MCF 10A (cell line): ENCODE measurements at regions of chr13 and their contacts with region 1.

Region 1: DNA sequence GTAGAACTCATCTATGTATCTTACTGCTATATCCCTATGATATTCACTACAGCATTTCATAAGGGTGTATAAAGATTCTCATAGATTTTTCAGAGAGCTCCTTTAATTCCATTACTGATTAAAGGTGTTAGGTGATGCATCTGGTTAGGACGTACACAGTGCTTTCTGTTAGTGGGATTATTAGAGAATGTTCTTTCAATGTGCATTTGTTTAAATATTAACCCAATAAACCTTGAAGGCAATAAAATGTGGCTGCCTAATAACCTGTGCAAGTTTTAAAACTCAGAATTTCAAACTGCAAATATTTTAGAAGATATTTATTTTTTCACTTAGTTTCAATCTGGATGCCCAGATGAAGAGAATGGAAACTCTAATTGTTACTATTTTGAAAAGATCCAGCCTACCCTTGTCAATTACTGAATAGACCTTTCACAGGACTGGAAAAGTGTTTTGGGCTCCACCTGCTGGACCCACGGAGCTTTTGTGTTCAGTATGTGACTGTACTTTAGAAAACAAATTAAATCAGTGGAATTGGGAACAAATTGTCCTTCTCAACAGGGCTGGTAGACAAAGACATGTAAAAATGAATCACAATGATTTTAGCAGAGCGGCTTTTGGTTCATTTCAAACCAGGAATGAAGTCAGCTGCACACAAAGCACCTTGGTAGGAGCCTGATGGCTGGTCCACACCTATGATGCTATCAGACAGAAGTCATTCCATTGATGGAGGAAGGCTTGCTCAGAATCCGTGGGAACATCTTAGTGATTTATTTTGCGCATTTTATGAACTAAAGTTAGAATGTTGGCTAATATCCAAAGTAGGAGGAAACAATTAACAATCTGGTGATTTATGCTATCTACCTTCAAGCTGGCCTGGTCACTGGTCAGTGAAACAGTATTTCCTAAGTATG is 89.4 kb upstream of the RAP2A start:
- DNase-seq: peak; percentile 83
- H3K4me3 Mint-ChIP-seq: no peak overlapping the region
- H3K27ac Mint-ChIP-seq: no peak overlapping the region
- H3K4me1 Mint-ChIP-seq: no peaks in the 10 kb centered on the region
- H3K27me3 Mint-ChIP-seq: no peaks in the 10 kb centered on the region
- CTCF ChIP-seq: peak; percentile 85

Region 2: GRCh38 chr13:97030705-97031452 is 313.6 kb before region 1 on chr13:
- CTCF ChIA-PET with region 1: no interaction called
- POLR2A ChIA-PET with region 1: no interaction called
- intact Hi-C with region 1: loop called (anchors 5 kb)
- DNase-seq: peak; percentile 51
- H3K4me3 Mint-ChIP-seq: no peak overlapping the region
- H3K27ac Mint-ChIP-seq: no peak overlapping the region
- H3K4me1 Mint-ChIP-seq: peaks cover 5% of the 10 kb centered on the region
- H3K27me3 Mint-ChIP-seq: no peaks in the 10 kb centered on the region
- CTCF ChIP-seq: peak; percentile 38

Region 3: GRCh38 chr13:97257800-97258799 is 86.4 kb before region 1 on chr13:
- CTCF ChIA-PET with region 1: interaction called, 3 read pairs
- POLR2A ChIA-PET with region 1: interaction called, 6 read pairs
- intact Hi-C with region 1: loop called (anchors 1 kb)
- DNase-seq: peak; percentile 83
- H3K4me3 Mint-ChIP-seq: peak overlapping the region; percentile 56
- H3K27ac Mint-ChIP-seq: peak overlapping the region; percentile 96
- H3K4me1 Mint-ChIP-seq: peaks cover 74% of the 10 kb centered on the region
- H3K27me3 Mint-ChIP-seq: no peaks in the 10 kb centered on the region
- CTCF ChIP-seq: no peak

Region 4: DNA sequence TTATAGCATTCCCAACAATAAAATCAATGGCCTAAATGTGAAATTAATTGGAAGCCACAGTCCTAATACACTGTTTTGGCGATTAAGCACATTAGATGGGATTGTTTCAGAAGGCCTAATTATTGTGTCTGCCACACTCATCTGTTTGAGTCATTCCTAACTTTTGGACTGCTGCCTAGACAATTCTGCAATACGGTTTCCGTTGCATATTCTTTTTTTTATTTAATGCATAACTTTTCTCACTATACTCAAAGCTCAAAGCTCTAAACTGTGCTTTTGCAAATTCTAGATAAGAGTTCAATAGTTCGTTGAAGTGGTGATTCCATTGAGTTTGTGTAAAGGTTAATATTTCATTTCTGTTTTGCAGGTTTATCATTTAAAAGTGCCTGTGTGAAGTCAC is 69.3 kb before region 1 on chr13:
- CTCF ChIA-PET with region 1: interaction called, 8 read pairs
- POLR2A ChIA-PET with region 1: interaction called, 10 read pairs
- intact Hi-C with region 1: loop called (anchors 2 kb)
- DNase-seq: peak; percentile 95
- H3K4me3 Mint-ChIP-seq: peak overlapping the region; percentile 11
- H3K27ac Mint-ChIP-seq: peak overlapping the region; percentile 92
- H3K4me1 Mint-ChIP-seq: peaks cover 65% of the 10 kb centered on the region
- H3K27me3 Mint-ChIP-seq: no peaks in the 10 kb centered on the region
- CTCF ChIP-seq: no peak

Region 5: DNA sequence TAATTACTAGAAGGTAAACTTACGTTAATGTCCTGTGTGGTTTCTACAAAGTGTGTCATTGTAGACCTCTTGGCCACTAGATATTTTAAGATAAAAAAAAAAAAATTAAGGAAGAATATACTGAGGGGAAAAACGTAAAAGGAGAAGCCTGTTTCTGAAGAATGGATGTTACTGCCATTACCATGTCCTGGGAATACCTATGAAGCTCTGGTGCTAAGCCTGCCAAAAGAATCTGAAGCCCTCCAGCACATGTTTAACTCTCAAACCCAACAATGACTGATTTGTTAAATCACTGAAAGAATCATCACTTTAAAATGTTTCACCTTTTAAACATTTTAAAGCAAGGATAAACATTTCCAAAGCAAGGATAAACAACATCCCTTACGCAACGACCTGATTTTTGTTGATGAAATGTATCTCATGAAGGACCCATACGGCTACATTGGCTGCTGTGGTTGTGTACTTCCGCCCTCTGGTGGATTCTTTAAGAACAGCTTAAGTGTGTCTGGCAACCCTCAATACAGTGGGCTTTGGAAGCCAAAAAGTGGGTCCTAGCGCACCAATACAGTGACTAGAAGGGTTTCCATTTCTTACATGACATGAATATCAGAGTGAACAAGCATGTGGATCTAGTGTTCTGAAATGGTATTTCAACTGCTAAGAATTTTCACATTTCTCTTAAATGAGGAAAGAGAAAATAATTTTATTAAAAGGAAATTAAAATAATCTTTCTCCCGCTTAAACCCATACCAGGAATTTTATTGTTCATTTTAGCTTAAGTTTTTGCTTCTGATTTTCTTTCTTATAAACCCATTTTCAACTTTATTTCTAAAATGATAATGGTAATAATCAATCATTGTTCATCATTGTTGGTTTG is 14.9 kb after region 1 on chr13:
- CTCF ChIA-PET with region 1: interaction called, 22 read pairs
- POLR2A ChIA-PET with region 1: interaction called, 3 read pairs
- intact Hi-C with region 1: loop called (anchors 1 kb)
- DNase-seq: peak; percentile 87
- H3K4me3 Mint-ChIP-seq: no peak overlapping the region
- H3K27ac Mint-ChIP-seq: peak overlapping the region; percentile 49
- H3K4me1 Mint-ChIP-seq: no peaks in the 10 kb centered on the region
- H3K27me3 Mint-ChIP-seq: no peaks in the 10 kb centered on the region
- CTCF ChIP-seq: peak; percentile 96

Region 6: DNA sequence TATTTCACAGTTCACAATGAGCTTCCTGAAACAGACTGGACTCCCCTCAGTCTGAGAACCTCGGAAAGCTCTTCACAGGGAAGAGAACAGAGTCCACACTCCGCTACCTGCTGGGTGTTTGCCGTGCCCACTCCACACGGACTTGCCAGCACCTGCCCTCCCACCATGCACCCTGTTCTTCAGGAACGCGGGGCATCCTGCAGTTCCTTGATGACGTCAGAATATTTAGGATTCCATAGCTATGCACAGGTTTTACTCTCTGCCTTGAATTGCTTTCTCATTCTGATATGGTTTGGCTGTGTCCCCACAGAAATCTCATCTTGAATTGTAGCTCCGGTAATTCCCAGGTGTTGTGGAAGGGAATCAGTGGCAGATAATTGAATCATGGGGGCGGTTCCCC is 724.0 kb after region 1 on chr13:
- CTCF ChIA-PET with region 1: no interaction called
- POLR2A ChIA-PET with region 1: no interaction called
- intact Hi-C with region 1: no loop called
- DNase-seq: no peak
- H3K4me3 Mint-ChIP-seq: peak overlapping the region; percentile 52
- H3K27ac Mint-ChIP-seq: no peak overlapping the region
- H3K4me1 Mint-ChIP-seq: no peaks in the 10 kb centered on the region
- H3K27me3 Mint-ChIP-seq: no peaks in the 10 kb centered on the region
- CTCF ChIP-seq: no peak